ENCODE measurements at regions of chr10 and their contacts with region 1.

Region 1: GRCh38 chr10:43348511-43349312 is 22.7 kb upstream of the FXYD4 start:
- DNase-seq: peak; percentile 88
- H3K4me3 ChIP-seq: no peak overlapping the region
- H3K27ac ChIP-seq: no peak overlapping the region
- H3K4me1 ChIP-seq: peaks cover 8% of the 10 kb centered on the region
- CTCF ChIP-seq: peak; percentile 98

Region 2: GRCh38 chr10:42574336-42574735 is 774.4 kb before region 1 on chr10:
- CTCF ChIA-PET with region 1: no interaction called
- POLR2A ChIA-PET with region 1: no interaction called
- intact Hi-C with region 1: no loop called
- DNase-seq: no peak
- H3K4me3 ChIP-seq: no peak overlapping the region
- H3K27ac ChIP-seq: no peak overlapping the region
- H3K4me1 ChIP-seq: no peaks in the 10 kb centered on the region
- CTCF ChIP-seq: no peak

Region 3: GRCh38 chr10:43048574-43049339 is 300.0 kb before region 1 on chr10:
- CTCF ChIA-PET with region 1: no interaction called
- POLR2A ChIA-PET with region 1: no interaction called
- intact Hi-C with region 1: no loop called
- DNase-seq: no peak
- H3K4me3 ChIP-seq: no peak overlapping the region
- H3K27ac ChIP-seq: no peak overlapping the region
- H3K4me1 ChIP-seq: no peaks in the 10 kb centered on the region
- CTCF ChIP-seq: no peak

Region 4: DNA sequence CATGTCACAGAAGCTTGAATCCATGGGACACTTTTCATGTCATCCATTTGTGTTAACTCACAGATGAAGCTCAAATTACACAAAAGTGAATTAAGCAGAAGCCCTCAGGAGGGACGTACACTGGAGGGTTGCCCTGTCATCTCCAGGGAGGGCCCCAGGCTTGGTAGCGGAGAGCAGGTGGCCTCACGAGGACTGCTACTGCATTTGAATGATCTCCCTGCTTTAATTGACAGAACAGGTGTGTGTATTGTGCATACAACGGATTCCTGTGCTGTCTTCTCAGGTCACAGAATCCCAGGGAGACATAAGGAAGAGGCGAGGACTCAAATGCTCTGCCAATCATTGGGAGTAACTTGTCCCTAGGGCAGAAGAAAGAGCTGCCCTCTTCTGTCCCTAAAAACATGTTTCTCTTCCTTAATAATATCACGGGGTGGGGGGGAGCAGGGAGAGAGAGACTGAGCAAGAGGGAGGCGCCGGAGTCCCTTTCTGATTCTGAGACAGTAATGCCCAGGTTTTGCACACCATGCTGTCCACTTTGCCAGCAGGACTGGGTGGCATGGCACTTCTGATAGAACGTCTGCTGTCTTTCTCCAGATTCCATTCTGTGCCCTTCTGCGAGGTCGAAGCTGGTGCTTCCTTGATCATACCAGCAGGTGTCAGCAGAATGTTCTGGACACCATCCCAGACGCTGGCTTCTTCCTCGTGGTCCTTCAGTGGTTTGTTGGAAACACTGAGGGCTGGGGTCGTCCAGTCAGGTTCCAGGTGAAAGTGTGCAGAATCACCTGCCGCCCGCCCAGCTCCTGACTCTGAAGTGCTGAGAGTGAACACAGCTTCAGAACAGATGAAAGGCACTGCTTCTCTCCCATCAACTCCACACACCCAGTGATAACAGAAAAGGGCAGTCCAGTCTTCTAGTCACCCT is 55.7 kb before region 1 on chr10:
- CTCF ChIA-PET with region 1: interaction called, 5 read pairs
- POLR2A ChIA-PET with region 1: no interaction called
- intact Hi-C with region 1: loop called (anchors 1 kb)
- DNase-seq: peak; percentile 64
- H3K4me3 ChIP-seq: no peak overlapping the region
- H3K27ac ChIP-seq: no peak overlapping the region
- H3K4me1 ChIP-seq: no peaks in the 10 kb centered on the region
- CTCF ChIP-seq: peak; percentile 85

Region 5: GRCh38 chr10:43461950-43462349 is 113.2 kb after region 1 on chr10:
- CTCF ChIA-PET with region 1: interaction called, 3 read pairs
- POLR2A ChIA-PET with region 1: interaction called, 9 read pairs
- intact Hi-C with region 1: loop called (anchors 1 kb)
- DNase-seq: peak; percentile 87
- H3K4me3 ChIP-seq: no peak overlapping the region
- H3K27ac ChIP-seq: no peak overlapping the region
- H3K4me1 ChIP-seq: no peaks in the 10 kb centered on the region
- CTCF ChIP-seq: peak; percentile 91